ENCODE measurements at regions of chr5 and their contacts with region 1.

Region 1: GRCh38 chr5:141320225-141321169 is at the start of gene TAF7:
- DNase-seq: peak; percentile 95
- ATAC-seq: peak; percentile 100
- total RNA-seq, gene TAF7: 84.3 TPM

Region 2: DNA sequence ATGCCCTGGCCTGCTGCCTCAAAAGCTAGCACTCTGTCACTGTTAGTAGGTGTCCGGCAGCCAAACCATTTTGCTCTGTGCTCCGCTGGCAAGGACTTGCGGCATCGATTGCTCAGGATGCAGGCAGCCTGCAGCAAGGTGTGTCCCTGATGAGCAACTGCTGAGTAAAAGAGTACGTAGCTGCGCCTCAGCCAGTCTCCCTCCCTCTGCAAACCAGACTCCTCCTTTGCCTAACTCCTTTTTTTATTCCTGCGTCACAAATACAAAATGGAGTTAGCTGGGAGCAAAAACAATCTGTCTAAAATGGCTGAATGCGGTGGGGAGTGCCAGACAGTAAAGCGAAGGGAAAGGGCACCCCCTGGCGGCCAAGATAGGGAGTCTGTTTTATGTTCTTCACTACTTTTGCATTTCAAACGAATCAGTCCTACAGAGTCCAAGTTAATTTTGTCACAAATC is 237.2 kb after region 1 on chr5:
- intact Hi-C with region 1: loop called (anchors 5 kb)
- DNase-seq: peak; percentile 92
- ATAC-seq: peak; percentile 93

Measured in sciatic nerve (tissue), 2 donors.